Right ventricle myocardium superior (tissue), 1 donor: ENCODE measurements at regions of chr12 and their contacts with region 1.

Region 1: GRCh38 chr12:92158796-92159439 is 13.3 kb upstream of the BTG1 start:
- DNase-seq: no peak
- ATAC-seq: no peak

Region 2: GRCh38 chr12:92049403-92049802 is 109.5 kb before region 1 on chr12:
- intact Hi-C with region 1: no loop called
- DNase-seq: no peak
- ATAC-seq: no peak

Region 3: GRCh38 chr12:92224685-92225331 is 65.9 kb after region 1 on chr12:
- intact Hi-C with region 1: loop called (anchors 10 kb)
- DNase-seq: no peak
- ATAC-seq: peak; percentile 57